HEK293 (cell line): ENCODE measurements at regions of chr6 and their contacts with region 1.

Region 1: GRCh38 chr6:157314705-157315321 is 8.5 kb downstream of the TMEM242 start:
- H3K4me3 ChIP-seq: no peak overlapping the region
- H3K27ac ChIP-seq: no peak overlapping the region
- H3K4me1 ChIP-seq: peaks cover 2% of the 10 kb centered on the region; the same call in 1 of the 2 replicates
- CTCF ChIP-seq: peak; percentile 77

Region 2: DNA sequence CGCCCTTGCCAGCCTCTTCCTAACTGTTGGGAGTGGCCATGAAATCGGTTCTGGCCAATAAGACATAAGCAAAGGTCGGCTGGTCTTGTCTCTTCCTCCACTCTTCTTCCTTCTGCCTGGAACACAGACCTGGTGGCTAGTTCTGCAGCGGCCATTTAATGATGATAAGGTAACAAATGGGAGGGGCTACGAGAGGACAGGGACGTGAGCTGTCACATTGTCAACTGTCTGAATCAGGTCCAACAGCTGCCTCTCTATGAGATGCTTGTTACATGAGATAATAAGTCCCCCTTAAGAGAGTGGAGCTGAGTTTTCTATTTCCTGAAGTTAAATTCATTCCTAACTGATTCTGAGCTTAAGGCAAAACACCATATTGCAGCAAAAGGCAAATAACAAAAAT is 21.0 kb after region 1 on chr6:
- CTCF ChIA-PET with region 1: interaction called, 39 read pairs
- POLR2A ChIA-PET with region 1: no interaction called
- H3K4me3 ChIP-seq: no peak overlapping the region
- H3K27ac ChIP-seq: no peak overlapping the region
- H3K4me1 ChIP-seq: no peaks in the 10 kb centered on the region
- CTCF ChIP-seq: no peak

Region 3: GRCh38 chr6:157488716-157489118 is 173.9 kb after region 1 on chr6:
- CTCF ChIA-PET with region 1: no interaction called
- POLR2A ChIA-PET with region 1: no interaction called
- H3K4me3 ChIP-seq: no peak overlapping the region
- H3K27ac ChIP-seq: no peak overlapping the region
- H3K4me1 ChIP-seq: peaks cover 20% of the 10 kb centered on the region
- CTCF ChIP-seq: no peak

Region 4: DNA sequence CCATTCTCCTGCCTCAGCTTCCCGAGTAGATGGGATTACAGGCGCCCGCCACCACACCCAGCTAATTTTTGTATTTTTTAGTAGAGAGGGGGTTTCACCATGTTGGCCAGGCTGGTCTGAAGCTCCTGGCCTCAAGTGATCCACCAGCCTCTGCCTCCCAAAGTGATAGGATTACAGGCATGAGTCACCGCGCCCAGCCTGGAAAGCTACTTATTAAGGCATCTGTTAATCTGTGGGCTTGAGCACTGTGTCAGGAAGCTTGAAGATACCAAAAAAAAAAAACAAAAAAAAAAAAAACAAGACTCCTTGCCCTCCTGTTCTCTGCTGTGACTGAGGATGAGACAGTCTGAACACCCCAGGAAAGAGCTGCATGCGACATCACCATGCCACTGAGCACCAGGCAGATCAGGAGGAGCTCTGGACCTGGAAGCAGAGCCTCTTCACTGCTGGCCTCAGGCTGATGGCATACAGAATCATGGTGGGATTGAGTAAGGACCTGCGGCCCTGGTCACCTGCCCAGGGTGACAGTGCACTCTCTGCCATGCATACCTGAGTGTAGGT is 341.7 kb after region 1 on chr6:
- CTCF ChIA-PET with region 1: interaction called, 14 read pairs
- POLR2A ChIA-PET with region 1: no interaction called
- H3K4me3 ChIP-seq: no peak overlapping the region
- H3K27ac ChIP-seq: no peak overlapping the region
- H3K4me1 ChIP-seq: no peaks in the 10 kb centered on the region
- CTCF ChIP-seq: no peak